ENCODE measurements at regions of chr19 and their contacts with region 1.

Region 1: DNA sequence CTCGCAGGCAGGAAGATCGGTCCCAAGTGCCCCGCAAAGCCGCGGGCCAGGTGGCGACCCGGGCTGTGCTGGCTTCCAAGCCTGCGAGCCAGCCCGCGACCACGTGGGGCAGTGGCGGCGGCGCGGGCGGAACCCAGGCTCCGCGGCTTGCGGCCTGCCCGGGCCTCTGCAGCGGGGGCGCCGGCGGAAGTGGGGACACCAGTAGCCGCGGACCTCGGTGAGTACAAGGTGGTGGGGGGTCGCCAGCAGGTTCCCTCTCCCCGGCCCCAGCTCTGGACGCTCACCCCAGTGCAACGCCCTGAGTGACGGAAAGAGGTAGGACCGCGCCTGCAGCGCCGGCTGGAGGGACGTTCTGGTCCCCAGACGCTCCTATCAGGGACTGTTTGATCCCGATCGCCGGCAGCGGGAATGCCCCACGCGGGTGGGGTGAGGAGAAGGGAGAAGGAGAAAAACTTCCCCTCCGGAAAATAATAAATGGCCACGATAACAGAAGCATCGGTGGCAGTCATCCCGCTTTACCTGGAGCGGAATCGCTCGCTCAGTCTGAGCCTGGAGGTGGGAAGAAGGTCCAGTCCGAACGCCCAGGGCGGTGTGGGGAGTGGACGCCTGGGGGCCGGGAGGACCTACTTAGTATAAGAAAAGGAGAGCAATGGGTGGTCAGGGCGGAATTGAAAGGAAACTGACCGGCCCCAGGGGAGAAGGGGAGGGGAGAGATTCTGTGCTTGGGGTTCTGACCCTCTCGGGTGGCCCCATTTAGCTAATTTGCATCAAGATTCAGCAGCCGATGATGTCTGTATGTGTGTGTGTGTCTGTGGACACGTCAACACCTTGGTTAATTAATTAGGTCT is at the start of gene GEMIN7:
- DNase-seq: peak; percentile 82
- CTCF ChIP-seq: peak; percentile 7

Region 2: DNA sequence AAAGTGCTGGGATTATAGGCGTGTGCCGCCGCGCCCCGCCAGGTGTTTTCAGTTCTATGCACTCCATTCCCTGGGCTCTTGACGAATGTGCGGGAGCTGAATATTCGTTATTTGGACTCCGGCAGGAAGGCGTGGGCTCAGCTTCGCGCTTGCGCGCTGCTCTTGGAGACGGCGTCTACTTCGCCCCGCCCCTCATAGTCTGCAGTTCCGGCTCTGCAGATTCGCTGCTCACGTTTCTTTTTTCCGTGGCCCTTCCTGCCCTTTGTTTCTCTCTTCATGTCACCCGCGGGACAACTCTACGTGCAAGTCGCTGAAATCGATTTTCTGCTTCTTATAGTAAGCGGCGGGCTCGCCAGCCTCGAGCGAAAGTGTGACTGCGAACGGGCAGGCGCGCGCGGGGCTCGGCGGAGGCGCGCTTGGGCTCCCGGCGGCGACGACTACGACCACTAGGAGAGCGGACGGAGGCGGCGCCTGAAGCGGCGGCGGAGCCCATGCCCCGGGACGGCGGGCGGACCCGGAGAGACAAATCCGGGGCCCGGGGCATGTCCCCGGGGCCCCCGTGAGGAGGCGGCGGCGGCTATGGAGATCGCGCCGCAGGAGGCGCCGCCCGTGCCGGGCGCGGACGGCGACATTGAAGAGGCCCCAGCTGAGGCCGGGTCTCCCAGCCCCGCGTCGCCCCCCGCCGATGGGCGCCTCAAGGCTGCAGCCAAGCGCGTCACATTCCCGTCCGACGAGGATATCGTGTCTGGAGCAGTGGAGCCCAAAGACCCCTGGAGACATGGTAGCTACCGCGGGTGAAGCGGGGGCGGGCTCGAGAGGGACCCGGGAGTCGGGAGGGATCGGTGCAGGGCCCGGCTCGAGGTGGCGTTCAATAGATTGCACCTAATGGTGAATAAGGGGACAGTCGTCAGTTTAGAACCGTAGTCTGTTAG is 13.7 kb after region 1 on chr19 and contains the start of gene PPP1R37:
- CTCF ChIA-PET with region 1: interaction called, 11 read pairs
- POLR2A ChIA-PET with region 1: interaction called, 8 read pairs
- DNase-seq: peak; percentile 95
- CTCF ChIP-seq: no peak

Region 3: DNA sequence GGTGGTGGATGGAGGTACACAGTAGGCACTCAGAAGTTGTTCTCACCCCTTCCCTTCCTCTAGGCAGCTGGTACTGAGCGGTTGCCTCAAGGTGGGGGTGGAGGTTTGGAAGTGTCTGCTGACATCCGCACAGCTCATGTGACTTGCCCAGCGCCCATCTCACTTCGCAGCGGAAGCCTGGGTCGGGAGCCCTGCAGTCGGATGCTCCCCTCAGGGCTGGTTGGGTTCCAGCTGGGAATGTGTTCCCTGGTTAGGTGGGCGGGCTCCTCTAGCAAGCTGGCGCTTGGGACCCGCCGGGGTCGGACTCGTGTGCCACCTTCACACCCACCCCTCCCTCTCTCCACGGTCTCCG is 23.8 kb after region 1 on chr19:
- CTCF ChIA-PET with region 1: no interaction called
- POLR2A ChIA-PET with region 1: no interaction called
- DNase-seq: no peak
- CTCF ChIP-seq: peak; percentile 30